ENCODE measurements at regions of chr17 and their contacts with region 1.

Region 1: DNA sequence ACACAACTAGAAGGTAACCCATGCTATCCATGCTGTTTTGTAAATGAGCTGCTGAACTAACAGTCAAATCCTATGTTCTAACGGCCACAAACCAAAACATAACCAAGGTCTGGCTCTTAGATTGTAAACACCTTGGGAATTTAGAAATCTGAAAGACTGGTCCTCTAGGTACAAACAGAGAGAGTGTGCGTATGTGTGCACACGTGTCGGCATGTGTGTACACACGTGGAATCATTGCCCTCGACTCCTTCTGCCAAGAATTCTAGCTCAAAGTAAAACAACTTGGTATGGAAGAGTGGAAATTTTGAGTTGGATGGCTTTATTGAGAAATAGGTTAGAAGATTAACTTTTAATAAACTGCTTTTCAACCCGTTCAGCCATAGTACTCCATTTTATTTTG is 18.1 kb upstream of the GHDC start:
- DNase-seq: no peak
- ATAC-seq: peak; percentile 33 to 64
- H3K4me3 ChIP-seq: no peak overlapping the region
- H3K27ac ChIP-seq: peak overlapping the region; percentile 84 to 91 (median 87)
- H3K4me1 ChIP-seq: peaks cover 23 to 27% of the 10 kb centered on the region in 2 donors
- H3K27me3 ChIP-seq: no peaks in the 10 kb centered on the region
- CTCF ChIP-seq: no peak
- POLR2A ChIP-seq: no peak

Region 2: GRCh38 chr17:42193969-42194899 is 18.1 kb before region 1 on chr17 and contains the start of gene GHDC:
- in situ Hi-C with region 1: no loop called
- intact Hi-C with region 1: loop called (anchors 2 kb)
- DNase-seq: peak; percentile 77 to 86
- ATAC-seq: peak; percentile 97 to 98
- H3K4me3 ChIP-seq: peak within 1 kb of the TSS; percentile 71 to 95 (median 79)
- H3K27ac ChIP-seq: peak within 1 kb of the TSS; percentile 80 to 95 (median 89)
- H3K4me1 ChIP-seq: peaks cover 16 to 23% of the 10 kb centered on the region in 2 donors
- H3K27me3 ChIP-seq: no peaks in the 10 kb centered on the region
- CTCF ChIP-seq: peak in 1 of 5 experiments; percentile 17
- POLR2A ChIP-seq: no peak
- total RNA-seq, gene GHDC: 13.8 to 20.0 (median 18.2) TPM

Region 3: GRCh38 chr17:42233941-42234340 is 21.6 kb after region 1 on chr17:
- in situ Hi-C with region 1: no loop called
- intact Hi-C with region 1: loop called (anchors 1 kb)
- DNase-seq: peak in 1 of 2 donors; percentile 49
- ATAC-seq: peak; percentile 97 to 99
- H3K4me3 ChIP-seq: no peak overlapping the region
- H3K27ac ChIP-seq: peak overlapping the region; percentile 81 to 88 (median 85)
- H3K4me1 ChIP-seq: peaks cover 56 to 59% of the 10 kb centered on the region in 2 donors
- H3K27me3 ChIP-seq: no peaks in the 10 kb centered on the region
- CTCF ChIP-seq: no peak
- POLR2A ChIP-seq: no peak

Region 4: GRCh38 chr17:42276359-42276608 is 63.9 kb after region 1 on chr17 and contains the start of gene STAT5B:
- in situ Hi-C with region 1: no loop called
- intact Hi-C with region 1: loop called (anchors 5 kb)
- DNase-seq: peak in 1 of 2 donors; percentile 67
- ATAC-seq: peak; percentile 76 to 80
- H3K4me3 ChIP-seq: peak within 1 kb of the TSS; percentile 84 to 96 (median 90)
- H3K27ac ChIP-seq: peak within 1 kb of the TSS; percentile 89 to 94 (median 90)
- H3K4me1 ChIP-seq: peaks cover 36 to 48% of the 10 kb centered on the region in 2 donors
- H3K27me3 ChIP-seq: no peaks in the 10 kb centered on the region
- CTCF ChIP-seq: no peak
- POLR2A ChIP-seq: peak; percentile 85 to 97
- total RNA-seq, gene STAT5B: 77.3 to 150 (median 80.7) TPM

Measured in gastrocnemius medialis (tissue), 4 donors.